Esophagus squamous epithelium (tissue), 5 donors: ENCODE measurements at regions of chr16 and their contacts with region 1.

Region 1: GRCh38 chr16:5488581-5488980 is 391.0 kb upstream of the EEF2KMT start:
- DNase-seq: no peak
- H3K4me3 ChIP-seq: no peak overlapping the region
- H3K27ac ChIP-seq: no peak overlapping the region
- H3K4me1 ChIP-seq: no peaks in the 10 kb centered on the region
- H3K27me3 ChIP-seq: peaks cover 0 to 5% (median 0%) of the 10 kb centered on the region in 4 donors
- CTCF ChIP-seq: no peak
- POLR2A ChIP-seq: no peak

Region 2: GRCh38 chr16:5235119-5235518 is 253.5 kb before region 1 on chr16:
- intact Hi-C with region 1: loop called (anchors 5 kb)
- DNase-seq: no peak
- H3K4me3 ChIP-seq: no peak overlapping the region
- H3K27ac ChIP-seq: no peak overlapping the region
- H3K4me1 ChIP-seq: peaks cover 0 to 5% (median 3%) of the 10 kb centered on the region in 3 donors
- H3K27me3 ChIP-seq: peaks cover 0 to 25% (median 0%) of the 10 kb centered on the region in 4 donors
- CTCF ChIP-seq: no peak
- POLR2A ChIP-seq: no peak

Region 3: DNA sequence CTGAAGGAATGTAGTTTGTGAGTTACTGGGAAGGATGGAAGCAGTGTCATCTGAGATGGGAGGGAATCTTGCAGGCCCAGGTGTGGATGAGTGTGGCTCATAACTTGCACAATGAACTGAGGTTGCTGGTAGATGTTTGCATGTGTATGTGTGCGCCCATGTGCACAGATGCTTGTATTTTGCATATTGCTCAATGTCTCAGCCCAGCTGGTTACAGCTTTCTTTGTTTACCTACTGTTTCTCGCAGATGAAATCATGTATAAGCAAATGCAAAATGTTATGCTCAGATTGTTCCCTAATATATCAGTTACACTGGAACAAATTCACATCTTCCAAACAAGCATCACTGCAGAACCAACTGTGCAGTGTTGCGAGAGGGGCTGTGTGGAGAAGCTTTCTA is 61.2 kb after region 1 on chr16:
- intact Hi-C with region 1: no loop called
- DNase-seq: no peak
- H3K4me3 ChIP-seq: no peak overlapping the region
- H3K27ac ChIP-seq: no peak overlapping the region
- H3K4me1 ChIP-seq: no peaks in the 10 kb centered on the region
- H3K27me3 ChIP-seq: no peaks in the 10 kb centered on the region
- CTCF ChIP-seq: no peak
- POLR2A ChIP-seq: no peak

Region 4: GRCh38 chr16:5590416-5590815 is 101.8 kb after region 1 on chr16:
- intact Hi-C with region 1: no loop called
- DNase-seq: no peak
- H3K4me3 ChIP-seq: no peak overlapping the region
- H3K27ac ChIP-seq: no peak overlapping the region
- H3K4me1 ChIP-seq: no peaks in the 10 kb centered on the region
- H3K27me3 ChIP-seq: no peaks in the 10 kb centered on the region
- CTCF ChIP-seq: no peak
- POLR2A ChIP-seq: no peak